ENCODE measurements at regions of chr1 and their contacts with region 1.

Region 1: DNA sequence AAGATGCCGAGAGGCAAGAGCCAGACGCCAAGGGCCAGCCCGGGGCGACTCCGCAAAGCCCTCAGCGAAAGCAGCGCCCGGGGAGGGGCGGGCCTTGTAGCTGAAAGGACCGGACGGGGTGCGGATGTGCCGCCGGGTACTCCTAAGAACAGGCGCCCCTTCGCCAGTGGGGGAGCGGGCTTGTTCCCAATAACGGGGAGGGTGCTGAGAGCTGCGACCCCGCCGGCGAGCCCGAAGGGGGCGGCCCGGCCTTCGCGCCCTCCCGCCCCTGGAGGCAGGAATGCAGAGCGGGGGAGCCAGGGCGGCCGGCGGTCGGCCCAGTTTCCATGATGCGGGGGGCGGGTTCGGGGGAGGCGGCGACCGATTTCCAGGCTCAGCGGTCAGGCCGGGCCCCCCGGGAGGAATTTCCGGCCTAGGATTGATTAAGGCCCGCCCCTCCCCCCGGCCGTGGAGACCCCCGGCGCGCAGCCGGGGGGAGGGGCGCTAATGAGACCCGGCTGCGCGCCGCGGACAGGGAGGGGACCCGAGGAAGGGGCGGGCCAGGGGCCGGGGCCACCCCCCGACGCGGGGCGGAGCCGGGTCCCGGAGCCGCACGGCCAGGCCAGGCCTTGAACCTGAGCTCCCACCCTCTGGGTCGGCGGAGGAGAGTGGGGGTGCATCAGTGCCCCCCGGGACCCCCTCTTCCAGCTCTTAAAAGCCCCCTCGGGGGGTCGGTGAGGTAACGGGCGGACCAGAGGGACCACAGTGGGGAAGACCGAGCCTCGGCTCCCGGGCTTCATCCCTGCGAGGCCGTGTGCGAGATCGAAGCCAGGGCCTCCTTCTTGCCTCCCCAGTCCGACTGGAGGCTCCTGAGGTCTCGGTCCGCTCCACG is 898 bp upstream of the TMEM200B start:
- DNase-seq: peak; percentile 37
- H3K4me3 ChIP-seq: peak overlapping the region; percentile 68
- H3K27ac ChIP-seq: peak overlapping the region; percentile 93
- H3K27me3 ChIP-seq: no peaks in the 10 kb centered on the region
- CTCF ChIP-seq: peak; percentile 71

Region 2: DNA sequence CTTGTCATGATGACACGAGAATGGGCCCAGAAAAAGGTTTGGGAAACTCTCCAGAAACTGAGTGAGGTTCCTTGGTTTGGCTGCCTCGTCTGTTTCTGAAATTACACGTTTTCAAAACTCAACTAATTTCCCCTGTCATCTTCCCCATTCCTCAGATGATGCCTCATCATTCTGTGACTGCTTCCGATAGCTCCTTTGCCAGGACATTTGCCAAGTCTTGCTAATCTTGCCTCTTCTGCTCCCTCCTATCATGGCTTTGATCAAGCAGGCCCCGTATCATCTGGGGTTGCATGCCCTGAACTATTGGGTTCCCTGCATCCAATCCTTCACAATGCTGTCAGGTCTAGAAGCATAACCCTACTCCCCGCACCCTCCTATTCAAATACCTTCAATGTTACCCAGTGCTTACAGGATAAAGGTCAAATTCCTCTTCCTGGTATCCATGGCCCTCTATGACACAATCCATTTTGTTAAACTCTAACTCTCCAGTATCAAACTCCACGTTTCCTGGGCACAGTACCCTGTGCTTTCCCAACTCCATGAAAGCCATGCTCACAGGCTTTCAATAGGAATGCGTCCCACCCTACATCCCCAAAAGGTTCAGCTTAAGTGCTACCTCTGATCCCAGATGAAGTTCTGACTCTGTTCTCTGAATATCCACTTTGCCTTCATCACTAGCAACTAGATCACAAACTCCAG is 21.3 kb after region 1 on chr1:
- CTCF ChIA-PET with region 1: interaction called, 5 read pairs
- POLR2A ChIA-PET with region 1: interaction called, 14 read pairs
- DNase-seq: peak; percentile 49
- H3K4me3 ChIP-seq: no peak overlapping the region
- H3K27ac ChIP-seq: peak overlapping the region; percentile 90
- H3K27me3 ChIP-seq: no peaks in the 10 kb centered on the region
- CTCF ChIP-seq: no peak

Region 3: GRCh38 chr1:29202584-29203340 is 78.2 kb after region 1 on chr1:
- CTCF ChIA-PET with region 1: interaction called, 16 read pairs
- POLR2A ChIA-PET with region 1: interaction called, 3 read pairs
- DNase-seq: peak; percentile 98
- H3K4me3 ChIP-seq: no peak overlapping the region
- H3K27ac ChIP-seq: peak overlapping the region; percentile 92
- H3K27me3 ChIP-seq: no peaks in the 10 kb centered on the region
- CTCF ChIP-seq: peak; percentile 95